ENCODE measurements at regions of chr12 and their contacts with region 1.

Region 1: DNA sequence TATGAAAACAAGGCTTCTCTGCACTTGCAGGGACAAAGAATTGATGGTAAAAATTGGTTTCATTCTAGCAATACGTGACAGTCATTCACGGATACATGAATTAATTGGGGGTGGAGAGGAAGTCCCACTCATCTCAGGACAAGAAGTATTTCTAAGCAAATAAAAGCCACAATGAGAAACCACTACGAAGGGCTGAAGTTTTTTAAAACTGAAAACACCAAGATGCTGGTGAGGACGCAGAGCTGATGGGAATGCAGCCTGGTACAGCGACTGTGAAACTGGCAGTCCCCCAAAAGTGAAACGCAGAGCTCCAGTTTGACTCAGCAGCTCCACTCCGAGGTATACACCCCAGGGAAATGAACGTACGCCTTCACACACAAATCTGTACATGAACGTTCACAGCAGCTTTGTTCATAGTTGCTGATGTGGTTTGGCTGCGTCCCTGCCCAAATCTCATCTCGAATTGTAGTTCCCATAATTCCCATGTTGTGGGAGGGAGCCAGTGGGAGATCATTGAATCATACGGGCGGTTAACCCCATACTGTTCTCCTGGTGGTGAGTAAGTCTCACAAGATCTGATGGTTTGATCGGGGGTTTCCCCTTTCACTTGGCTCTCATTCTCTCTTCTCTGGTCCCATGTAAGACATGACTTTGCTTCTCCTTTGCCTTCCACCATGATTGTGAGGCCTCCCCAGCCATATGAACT is 89.0 kb downstream of the SCARB1 start:
- DNase-seq: no peak
- H3K4me3 ChIP-seq: no peak overlapping the region
- H3K4me3 Mint-ChIP-seq: no peak overlapping the region
- H3K27ac Mint-ChIP-seq: no peak overlapping the region
- H3K4me1 ChIP-seq: peaks cover 22% of the 10 kb centered on the region; the same call in 1 of the 2 replicates
- H3K4me1 Mint-ChIP-seq: peaks cover 24% of the 10 kb centered on the region
- H3K27me3 ChIP-seq: no peaks in the 10 kb centered on the region
- H3K27me3 Mint-ChIP-seq: no peaks in the 10 kb centered on the region
- CTCF ChIP-seq: no peak

Region 2: DNA sequence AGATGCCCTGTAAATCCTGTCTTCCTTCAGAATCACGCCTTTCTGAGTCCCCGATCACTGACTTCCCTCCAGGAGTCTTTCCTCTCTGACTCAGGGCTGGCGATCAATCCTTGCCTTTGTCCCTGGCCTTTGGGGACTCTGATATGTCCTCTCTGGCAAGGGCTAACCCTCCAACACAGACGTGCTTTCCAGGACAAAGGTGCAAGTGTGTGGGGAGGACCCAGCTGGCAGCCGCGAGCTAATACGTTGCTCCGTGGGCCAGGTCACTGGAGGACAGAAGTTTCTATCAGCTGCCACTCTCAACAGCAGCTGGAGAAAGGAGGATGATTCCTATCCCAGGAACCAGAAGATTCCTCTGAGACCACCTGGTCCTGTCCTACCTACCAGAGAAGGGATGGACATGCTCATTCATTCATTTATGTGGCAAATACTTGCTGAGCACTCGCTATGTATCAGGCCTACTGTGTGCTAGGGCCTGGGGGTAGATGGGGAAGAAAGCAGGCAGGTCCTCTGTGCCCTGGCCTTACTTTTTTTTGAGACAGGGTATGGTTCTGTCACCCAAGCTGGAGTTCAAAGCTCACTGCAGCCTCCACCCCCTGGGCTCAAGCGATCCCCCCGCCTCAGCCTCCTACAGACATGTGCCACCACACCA is 97.6 kb after region 1 on chr12:
- CTCF ChIA-PET with region 1: no interaction called
- POLR2A ChIA-PET with region 1: interaction called, 19 read pairs
- intact Hi-C with region 1: no loop called
- DNase-seq: no peak
- H3K4me3 ChIP-seq: no peak overlapping the region
- H3K4me3 Mint-ChIP-seq: no peak overlapping the region
- H3K27ac Mint-ChIP-seq: no peak overlapping the region
- H3K4me1 ChIP-seq: peaks cover 19% of the 10 kb centered on the region
- H3K4me1 Mint-ChIP-seq: peaks cover 17% of the 10 kb centered on the region
- H3K27me3 ChIP-seq: no peaks in the 10 kb centered on the region
- H3K27me3 Mint-ChIP-seq: no peaks in the 10 kb centered on the region
- CTCF ChIP-seq: no peak